ENCODE measurements at regions of chr15 and their contacts with region 1.

Region 1: GRCh38 chr15:65856821-65857455 is 12.4 kb upstream of the RAB11A start:
- DNase-seq: peak; percentile 73 to 83 (median 81)
- H3K4me3 ChIP-seq: no peak overlapping the region
- H3K27ac ChIP-seq: no peak overlapping the region
- H3K4me1 ChIP-seq: peaks cover 0 to 12% (median 6%) of the 10 kb centered on the region in 4 experiments
- H3K27me3 ChIP-seq: no peaks in the 10 kb centered on the region

Region 2: DNA sequence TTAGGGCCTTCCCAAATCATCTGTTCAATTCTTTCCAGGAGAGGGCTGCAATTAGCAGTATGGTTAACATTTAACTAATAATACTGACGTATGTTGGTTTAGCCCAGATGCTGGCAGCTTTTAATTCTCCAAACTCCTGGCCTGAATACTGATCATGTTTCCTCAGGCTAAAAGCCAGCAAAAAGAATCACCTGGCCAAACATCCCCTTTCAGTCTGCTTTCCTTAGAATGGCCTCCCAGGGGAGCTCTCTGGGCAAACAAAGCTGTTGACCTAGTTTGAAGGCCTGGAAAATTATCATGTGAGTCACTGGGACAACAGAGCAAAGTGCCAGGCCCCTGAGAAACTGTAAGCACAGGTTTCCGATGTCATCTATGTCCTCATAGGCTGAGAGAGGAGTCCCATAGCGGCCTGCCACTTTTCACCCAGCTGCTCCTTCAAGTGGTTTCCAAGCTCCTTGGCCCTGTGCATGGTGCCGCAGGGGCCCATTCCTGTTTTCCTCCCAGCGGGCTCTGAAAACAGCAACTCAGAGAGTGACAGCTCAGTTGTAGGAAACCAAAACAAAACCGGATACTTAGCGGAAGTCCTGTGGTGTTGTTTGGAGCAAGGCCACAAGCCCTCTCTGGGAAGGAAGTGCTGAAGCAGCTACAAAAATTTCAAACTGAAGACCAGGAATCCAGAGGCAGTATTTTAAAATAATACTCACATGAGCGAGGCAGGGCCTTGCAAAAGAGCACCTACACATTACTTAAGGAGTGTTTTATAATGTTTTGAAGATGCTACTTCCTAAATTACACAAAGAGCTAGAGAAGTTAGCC is 24.2 kb before region 1 on chr15:
- CTCF ChIA-PET with region 1: interaction called, 10 read pairs
- POLR2A ChIA-PET with region 1: interaction called, 4 read pairs
- DNase-seq: peak; percentile 79 to 92 (median 87)
- H3K4me3 ChIP-seq: peak overlapping the region in 4 of 7 experiments; percentile 20 to 46 (median 32)
- H3K27ac ChIP-seq: peak overlapping the region in 1 of 2 experiments; percentile 73
- H3K4me1 ChIP-seq: peaks cover 34 to 63% (median 59%) of the 10 kb centered on the region in 4 experiments
- H3K27me3 ChIP-seq: no peaks in the 10 kb centered on the region

Region 3: GRCh38 chr15:65869127-65869953 is 12.4 kb after region 1 on chr15 and contains the start of gene RAB11A:
- CTCF ChIA-PET with region 1: interaction called, 15 read pairs
- POLR2A ChIA-PET with region 1: interaction called, 5 read pairs
- DNase-seq: peak; percentile 98 to 99 (median 99)
- H3K4me3 ChIP-seq: peak within 1 kb of the TSS; percentile 83 to 97 (median 92)
- H3K27ac ChIP-seq: peak within 1 kb of the TSS; percentile 81 to 94
- H3K4me1 ChIP-seq: peaks cover 0 to 17% (median 8%) of the 10 kb centered on the region in 4 experiments
- H3K27me3 ChIP-seq: no peaks in the 10 kb centered on the region

Region 4: DNA sequence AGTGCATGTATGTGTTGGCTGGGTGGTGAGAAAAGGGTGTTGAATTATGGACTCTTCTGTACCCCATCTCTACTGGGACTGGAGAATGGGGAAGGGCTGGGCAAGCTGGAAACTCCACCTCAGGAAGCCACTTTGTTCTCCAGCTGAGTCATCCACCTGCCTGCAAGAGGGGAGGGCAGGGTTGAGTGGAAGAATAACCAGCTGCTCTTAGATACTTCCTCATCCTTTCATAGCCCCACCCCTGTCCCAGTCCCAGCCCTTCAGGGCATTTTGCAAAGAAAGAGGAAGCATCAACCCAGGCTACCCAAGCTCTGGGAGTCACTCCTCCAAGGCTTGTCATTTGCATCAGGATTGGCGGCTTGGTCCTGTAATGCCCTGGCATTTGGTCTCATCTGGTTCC is 45.4 kb after region 1 on chr15:
- CTCF ChIA-PET with region 1: no interaction called
- POLR2A ChIA-PET with region 1: no interaction called
- DNase-seq: peak; percentile 85 to 95 (median 94)
- H3K4me3 ChIP-seq: no peak overlapping the region
- H3K27ac ChIP-seq: no peak overlapping the region
- H3K4me1 ChIP-seq: peaks cover 4 to 20% (median 10%) of the 10 kb centered on the region in 4 experiments
- H3K27me3 ChIP-seq: no peaks in the 10 kb centered on the region

Measured in common myeloid progenitor, CD34-positive (primary cell).